GM10248 (cell line): ENCODE measurements at regions of chr17 and their contacts with region 1.

Region 1: DNA sequence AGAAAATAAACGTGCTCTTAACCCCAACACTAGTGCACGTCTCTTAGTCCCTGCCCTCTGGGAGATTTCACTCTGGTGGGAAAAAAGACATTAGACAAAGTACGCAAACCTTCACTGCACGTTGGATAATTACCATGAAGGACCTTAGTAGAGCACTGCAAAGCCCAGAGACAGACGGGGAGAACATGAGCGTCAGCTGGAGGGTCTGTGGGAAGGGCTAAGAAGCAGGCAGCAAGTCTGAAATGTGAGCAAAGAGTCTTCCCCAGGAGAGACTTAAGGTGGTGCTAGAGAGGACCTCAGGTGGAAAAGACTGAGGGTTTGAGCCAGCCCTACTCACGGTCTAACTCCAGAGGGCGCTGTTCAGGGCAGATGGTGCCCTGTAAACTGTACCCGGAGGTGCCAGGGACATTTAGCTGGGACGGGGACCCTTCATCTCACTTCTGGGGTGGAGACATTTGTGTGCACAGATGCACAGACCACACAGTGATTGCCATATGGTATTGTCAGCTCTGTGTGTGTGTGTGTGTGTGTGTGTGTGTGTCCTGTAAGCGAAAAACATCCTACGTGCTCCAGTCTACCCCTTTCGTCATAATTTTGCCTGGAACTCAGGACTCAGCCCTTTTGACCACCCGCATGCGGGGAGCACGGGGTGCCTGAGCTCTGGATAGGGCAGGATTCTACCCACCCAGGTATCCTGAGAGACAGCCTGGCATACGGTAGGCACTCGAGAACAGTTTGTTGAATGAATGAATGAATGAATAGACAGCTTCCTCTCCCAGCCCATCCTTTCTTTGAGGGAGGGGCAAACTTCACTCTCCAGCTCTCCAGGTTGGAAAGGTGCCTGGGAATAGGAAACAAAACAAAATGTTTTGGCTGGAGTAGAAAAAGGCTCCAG is 10.1 kb upstream of the STAC2 start:
- DNase-seq: peak; percentile 77
- CTCF ChIP-seq: peak; percentile 63

Region 2: DNA sequence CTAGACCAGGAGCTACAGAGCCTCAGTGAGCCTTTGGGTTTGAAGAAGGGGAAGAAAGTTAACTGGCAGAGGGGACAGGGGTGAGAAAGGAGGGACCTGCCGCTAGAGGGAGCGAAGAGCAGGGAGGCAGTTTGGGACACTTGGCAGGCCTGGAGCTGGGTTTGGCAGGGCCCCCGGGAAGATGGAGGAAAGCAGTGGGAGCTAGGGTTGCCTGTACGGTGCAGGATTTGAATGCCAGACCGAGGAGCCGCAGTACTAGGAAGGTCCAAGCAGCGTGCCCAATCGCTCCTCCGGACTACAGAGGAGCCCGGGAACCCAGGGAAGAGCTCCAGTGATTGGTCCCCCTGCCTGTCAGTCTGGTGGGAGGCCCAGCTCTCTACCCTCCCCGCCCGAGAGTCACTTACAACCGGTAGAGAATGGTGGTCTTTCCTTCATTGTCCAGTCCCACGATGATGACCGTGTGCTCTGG is 71.1 kb before region 1 on chr17:
- CTCF ChIA-PET with region 1: interaction called, 13 read pairs
- POLR2A ChIA-PET with region 1: no interaction called
- DNase-seq: peak; percentile 97
- CTCF ChIP-seq: peak; percentile 75

Region 3: GRCh38 chr17:39209317-39210092 is 26.3 kb before region 1 on chr17:
- CTCF ChIA-PET with region 1: interaction called, 82 read pairs
- POLR2A ChIA-PET with region 1: interaction called, 4 read pairs
- DNase-seq: no peak
- CTCF ChIP-seq: no peak

Region 4: GRCh38 chr17:39219647-39220154 is 16.1 kb before region 1 on chr17:
- CTCF ChIA-PET with region 1: interaction called, 19 read pairs
- POLR2A ChIA-PET with region 1: no interaction called
- DNase-seq: no peak
- CTCF ChIP-seq: no peak

Region 5: DNA sequence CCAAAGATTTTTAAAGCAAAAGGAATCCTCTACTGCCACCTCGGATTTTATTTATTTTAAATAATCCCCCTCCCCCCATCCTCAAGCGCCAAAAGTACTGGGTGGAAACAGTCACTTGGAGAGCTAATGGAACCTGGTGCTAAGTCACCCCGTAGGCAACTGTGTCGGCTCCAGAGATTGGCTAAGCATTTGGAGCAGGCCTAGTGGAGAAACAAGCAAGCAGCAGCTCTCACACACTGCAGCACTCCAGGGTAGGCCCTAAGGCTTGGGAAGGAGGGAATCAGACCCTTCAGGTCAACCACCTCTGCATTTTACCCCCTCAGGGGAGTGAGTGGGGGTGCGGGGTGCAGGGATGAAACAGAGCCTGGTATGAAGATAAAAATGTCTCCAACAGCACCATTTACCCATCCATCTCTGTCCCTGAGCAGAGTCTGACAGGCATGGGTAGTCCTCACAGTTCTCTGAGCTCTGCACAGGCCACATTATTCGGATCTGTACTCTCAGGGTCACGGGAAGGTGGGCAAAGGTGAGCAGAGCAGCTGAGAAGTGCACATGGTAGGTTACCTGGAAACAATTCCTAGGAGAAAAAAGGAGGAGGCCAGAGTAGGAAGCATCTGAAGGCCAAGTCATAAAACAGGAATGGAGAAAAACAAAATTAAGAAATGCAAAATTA is 17.1 kb after region 1 on chr17:
- CTCF ChIA-PET with region 1: interaction called, 93 read pairs
- POLR2A ChIA-PET with region 1: no interaction called
- DNase-seq: no peak
- CTCF ChIP-seq: no peak